A549 (cell line): ENCODE measurements at regions of chr1 and their contacts with region 1.

Region 1: DNA sequence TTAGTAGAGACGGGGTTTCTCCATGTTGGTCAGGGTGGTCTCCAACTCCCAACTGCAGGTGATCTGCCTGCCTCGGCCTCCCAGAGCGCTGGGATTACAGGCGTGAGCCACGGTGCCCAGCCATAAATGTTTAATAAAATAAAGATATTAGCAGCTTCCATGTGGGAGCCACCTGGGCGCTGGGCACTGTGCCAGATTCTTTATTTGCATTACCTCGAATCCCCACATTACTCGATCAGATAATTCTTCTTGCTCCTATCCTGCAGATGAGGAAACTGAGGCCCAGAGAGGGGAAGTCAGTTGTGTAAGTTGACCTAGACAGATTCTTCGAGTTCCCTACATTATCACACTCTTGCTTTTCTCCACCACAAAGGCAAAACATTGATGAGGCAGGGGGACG is 24.9 kb upstream of the TENT5B start:
- DNase-seq: no peak
- ATAC-seq: no peak
- H3K4me3 ChIP-seq: no peak overlapping the region
- H3K27ac ChIP-seq: no peak overlapping the region
- H3K4me1 ChIP-seq: no peaks in the 10 kb centered on the region
- CTCF ChIP-seq: no peak
- EP300 ChIP-seq: no peak
- POLR2A ChIP-seq: no peak
- RAD21 ChIP-seq: no peak

Region 2: GRCh38 chr1:26993237-26994019 is 44.1 kb before region 1 on chr1 and contains the start of gene TRNP1:
- CTCF ChIA-PET with region 1: interaction called, 51 read pairs
- POLR2A ChIA-PET with region 1: interaction called, 6 read pairs
- DNase-seq: peak; percentile 77 to 91
- ATAC-seq: peak; percentile 36 to 56
- H3K4me3 ChIP-seq: peak within 1 kb of the TSS; percentile 96
- H3K27ac ChIP-seq: peak within 1 kb of the TSS; percentile 100
- H3K4me1 ChIP-seq: peaks cover 53% of the 10 kb centered on the region
- CTCF ChIP-seq: no peak
- EP300 ChIP-seq: no peak
- POLR2A ChIP-seq: peak; percentile 99
- RAD21 ChIP-seq: 0 out of 5 replicates have a peak, but pooled peaks of 1 of the 2 experiments have one; percentile 17
- polyA plus RNA-seq, gene TRNP1: 113 and 134 TPM in 2 replicates